BJ (cell line): ENCODE measurements at regions of chr1 and their contacts with region 1.

Region 1: GRCh38 chr1:212070720-212071302 is 35.3 kb downstream of the DTL start:
- DNase-seq: no peak
- H3K4me3 ChIP-seq: no peak overlapping the region
- H3K27me3 ChIP-seq: no peaks in the 10 kb centered on the region
- CTCF ChIP-seq: peak; percentile 76

Region 2: GRCh38 chr1:212012034-212012740 is 58.6 kb before region 1 on chr1:
- CTCF ChIA-PET with region 1: no interaction called
- POLR2A ChIA-PET with region 1: no interaction called
- DNase-seq: no peak
- H3K4me3 ChIP-seq: no peak overlapping the region
- H3K27me3 ChIP-seq: no peaks in the 10 kb centered on the region
- CTCF ChIP-seq: peak; percentile 97

Region 3: GRCh38 chr1:212104586-212105325 is 33.9 kb after region 1 on chr1:
- CTCF ChIA-PET with region 1: interaction called, 10 read pairs
- POLR2A ChIA-PET with region 1: no interaction called
- DNase-seq: peak; percentile 11
- H3K4me3 ChIP-seq: no peak overlapping the region
- H3K27me3 ChIP-seq: no peaks in the 10 kb centered on the region
- CTCF ChIP-seq: no peak

Region 4: DNA sequence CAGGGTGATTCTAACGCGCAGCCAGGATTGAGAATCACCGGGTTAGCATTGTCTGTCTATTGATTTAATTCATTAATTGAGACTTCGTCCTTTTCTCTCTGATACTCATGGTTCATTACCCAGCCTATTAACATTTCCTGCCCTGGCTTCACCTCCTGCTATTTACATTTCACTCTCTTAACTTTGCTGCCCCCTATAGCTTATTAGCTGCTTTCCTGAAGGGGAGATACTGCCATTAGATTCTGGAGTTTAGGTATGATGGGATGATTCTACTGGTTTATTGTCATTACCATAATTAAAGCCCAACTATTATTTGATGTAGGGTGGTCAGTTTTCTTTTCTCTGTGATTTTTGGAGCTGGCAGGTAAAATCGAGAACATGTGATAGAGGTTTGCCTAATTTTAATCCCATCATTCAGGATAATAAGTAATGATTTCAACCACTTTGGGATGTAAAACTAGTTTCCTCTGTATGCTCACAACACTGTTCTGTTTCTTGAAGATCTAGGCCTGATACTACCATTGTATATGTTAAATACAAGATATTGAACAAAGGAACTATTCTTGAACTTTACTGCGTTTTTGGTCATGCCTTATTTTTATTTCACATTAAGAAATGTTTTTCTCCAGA is 220.8 kb after region 1 on chr1:
- CTCF ChIA-PET with region 1: interaction called, 93 read pairs
- POLR2A ChIA-PET with region 1: no interaction called
- DNase-seq: no peak
- H3K4me3 ChIP-seq: no peak overlapping the region
- H3K27me3 ChIP-seq: no peaks in the 10 kb centered on the region
- CTCF ChIP-seq: peak; percentile 70

Region 5: GRCh38 chr1:212368073-212368484 is 297.3 kb after region 1 on chr1:
- CTCF ChIA-PET with region 1: interaction called, 100 read pairs
- POLR2A ChIA-PET with region 1: no interaction called
- DNase-seq: peak; percentile 17
- H3K4me3 ChIP-seq: no peak overlapping the region
- H3K27me3 ChIP-seq: no peaks in the 10 kb centered on the region
- CTCF ChIP-seq: peak; percentile 93

Region 6: GRCh38 chr1:212432706-212433576 is 362.1 kb after region 1 on chr1 and contains the start of gene NENF:
- CTCF ChIA-PET with region 1: no interaction called
- POLR2A ChIA-PET with region 1: no interaction called
- DNase-seq: peak; percentile 11
- H3K4me3 ChIP-seq: peak within 1 kb of the TSS; percentile 59
- H3K27me3 ChIP-seq: no peaks in the 10 kb centered on the region
- CTCF ChIP-seq: no peak
- polyA plus RNA-seq, gene NENF: 77.4 and 85.6 TPM in 2 replicates

Region 7: GRCh38 chr1:212455803-212456528 is 385.2 kb after region 1 on chr1:
- CTCF ChIA-PET with region 1: interaction called, 176 read pairs
- POLR2A ChIA-PET with region 1: no interaction called
- DNase-seq: peak; percentile 15
- H3K4me3 ChIP-seq: no peak overlapping the region
- H3K27me3 ChIP-seq: no peaks in the 10 kb centered on the region; the same call in 1 of the 2 replicates
- CTCF ChIP-seq: peak; percentile 97